ENCODE measurements at regions of chr11 and their contacts with region 1.

Region 1: GRCh38 chr11:67401495-67402191 is at the start of gene PPP1CA:
- DNase-seq: peak; percentile 98
- ATAC-seq: peak; percentile 55
- H3K4me3 Mint-ChIP-seq: peak within 1 kb of the TSS; percentile 98
- H3K27ac Mint-ChIP-seq: peak within 1 kb of the TSS; percentile 95
- H3K4me1 Mint-ChIP-seq: peaks cover 40% of the 10 kb centered on the region
- H3K27me3 Mint-ChIP-seq: no peaks in the 10 kb centered on the region
- total RNA-seq, gene PPP1CA: 290 to 311 TPM

Region 2: GRCh38 chr11:67337257-67337656 is 64.4 kb before region 1 on chr11:
- POLR2A ChIA-PET with region 1: no interaction called
- DNase-seq: no peak
- ATAC-seq: no peak
- H3K4me3 Mint-ChIP-seq: no peak overlapping the region
- H3K27ac Mint-ChIP-seq: no peak overlapping the region
- H3K4me1 Mint-ChIP-seq: no peaks in the 10 kb centered on the region
- H3K27me3 Mint-ChIP-seq: no peaks in the 10 kb centered on the region

Region 3: GRCh38 chr11:67353317-67354074 is 48.1 kb before region 1 on chr11 and contains the start of gene POLD4:
- POLR2A ChIA-PET with region 1: interaction called, 42 read pairs
- DNase-seq: peak; percentile 95
- ATAC-seq: peak; percentile 87
- H3K4me3 Mint-ChIP-seq: peak within 1 kb of the TSS; percentile 98
- H3K27ac Mint-ChIP-seq: peak within 1 kb of the TSS; percentile 100
- H3K4me1 Mint-ChIP-seq: peaks cover 29% of the 10 kb centered on the region
- H3K27me3 Mint-ChIP-seq: no peaks in the 10 kb centered on the region
- total RNA-seq, gene POLD4: 73.2 to 78.2 TPM

Region 4: GRCh38 chr11:67420646-67421420 is 19.2 kb after region 1 on chr11:
- POLR2A ChIA-PET with region 1: interaction called, 247 read pairs
- DNase-seq: peak; percentile 100
- ATAC-seq: peak; percentile 75
- H3K4me3 Mint-ChIP-seq: peak overlapping the region; percentile 84
- H3K27ac Mint-ChIP-seq: peak overlapping the region; percentile 90
- H3K4me1 Mint-ChIP-seq: peaks cover 43% of the 10 kb centered on the region
- H3K27me3 Mint-ChIP-seq: no peaks in the 10 kb centered on the region

Region 5: GRCh38 chr11:67468835-67469811 is 67.5 kb after region 1 on chr11 and contains the start of gene TMEM134:
- POLR2A ChIA-PET with region 1: interaction called, 35 read pairs
- DNase-seq: peak; percentile 97
- ATAC-seq: peak; percentile 76
- H3K4me3 Mint-ChIP-seq: peak within 1 kb of the TSS; percentile 95
- H3K27ac Mint-ChIP-seq: peak within 1 kb of the TSS; percentile 79
- H3K4me1 Mint-ChIP-seq: peaks cover 21% of the 10 kb centered on the region
- H3K27me3 Mint-ChIP-seq: no peaks in the 10 kb centered on the region
- total RNA-seq, gene TMEM134: 63.2 to 69.1 TPM

Region 6: GRCh38 chr11:67492801-67493547 is 91.3 kb after region 1 on chr11:
- POLR2A ChIA-PET with region 1: no interaction called
- DNase-seq: no peak
- ATAC-seq: no peak
- H3K4me3 Mint-ChIP-seq: no peak overlapping the region
- H3K27ac Mint-ChIP-seq: no peak overlapping the region
- H3K4me1 Mint-ChIP-seq: peaks cover 11% of the 10 kb centered on the region
- H3K27me3 Mint-ChIP-seq: no peaks in the 10 kb centered on the region

Region 7: DNA sequence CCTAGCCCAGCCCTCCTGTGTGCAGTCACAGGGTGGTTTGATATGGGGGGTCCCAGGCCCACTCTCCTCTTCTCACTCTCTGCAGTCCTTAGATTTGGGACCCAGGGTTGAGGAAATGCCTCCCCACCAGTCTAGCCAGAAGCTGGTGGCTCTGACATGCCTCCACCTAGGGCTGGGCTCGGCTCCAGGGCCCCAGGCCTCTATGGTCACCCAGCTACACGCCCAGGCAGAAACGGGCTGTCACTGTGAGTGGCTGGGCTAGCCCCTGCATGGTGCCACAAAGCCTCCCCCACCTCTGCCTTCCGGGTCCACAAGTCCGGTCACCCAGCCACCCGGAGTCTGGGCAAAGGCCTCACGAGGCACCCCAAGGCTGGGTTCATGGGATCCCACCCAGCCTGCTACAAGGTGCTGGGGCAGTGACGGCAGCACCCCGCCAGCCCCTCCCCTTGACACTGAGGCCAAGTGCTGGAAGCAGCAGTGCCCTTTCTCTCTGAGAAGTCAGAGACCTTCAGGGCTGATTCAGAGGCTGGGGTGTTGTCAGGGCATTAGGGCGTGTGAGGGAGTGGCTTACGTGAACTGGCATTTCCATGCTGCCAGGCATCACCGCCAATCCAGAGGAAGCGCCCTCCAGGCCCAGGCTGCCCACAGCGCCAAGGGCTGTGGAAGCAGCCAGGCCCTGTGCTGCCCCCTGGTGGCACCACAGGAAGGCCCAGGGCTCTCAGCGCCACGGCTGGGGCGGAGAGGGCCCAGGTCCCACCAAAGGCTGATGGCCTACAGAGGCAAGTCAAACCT is 104.2 kb after region 1 on chr11:
- POLR2A ChIA-PET with region 1: interaction called, 15 read pairs
- DNase-seq: peak; percentile 94
- ATAC-seq: peak; percentile 40
- H3K4me3 Mint-ChIP-seq: peak overlapping the region; percentile 93
- H3K27ac Mint-ChIP-seq: peak overlapping the region; percentile 94
- H3K4me1 Mint-ChIP-seq: peaks cover 37% of the 10 kb centered on the region
- H3K27me3 Mint-ChIP-seq: peaks cover 5% of the 10 kb centered on the region

Measured in activated naive CD8-positive, alpha-beta T cell treated with anti-CD3 and anti-CD28 coated beads, Interleukin-2, amount 10 ng/mL, durations not matched to agents 7 days and 5 days (primary cell).